ENCODE measurements at regions of chr17 and their contacts with region 1.

Region 1: GRCh38 chr17:75779231-75779986 is 5.2 kb upstream of the UNK start:
- DNase-seq: peak; percentile 94
- H3K4me3 Mint-ChIP-seq: peak overlapping the region; percentile 98
- H3K27ac Mint-ChIP-seq: peak overlapping the region; percentile 99
- H3K4me1 Mint-ChIP-seq: peaks cover 52% of the 10 kb centered on the region
- H3K27me3 Mint-ChIP-seq: peaks cover 2% of the 10 kb centered on the region

Region 2: GRCh38 chr17:75667021-75667790 is 112.2 kb before region 1 on chr17 and contains the starts of genes RECQL5 and SAP30BP:
- intact Hi-C with region 1: loop called (anchors 1 kb)
- DNase-seq: peak; percentile 98
- H3K4me3 Mint-ChIP-seq: peak within 1 kb of the TSS; percentile 79
- H3K27ac Mint-ChIP-seq: peak within 1 kb of the TSS; percentile 71
- H3K4me1 Mint-ChIP-seq: peaks cover 11% of the 10 kb centered on the region
- H3K27me3 Mint-ChIP-seq: no peaks in the 10 kb centered on the region
- total RNA-seq, gene RECQL5: 29.9 and 34.1 TPM in 2 replicates
- total RNA-seq, gene SAP30BP: 113 and 117 TPM in 2 replicates

Region 3: DNA sequence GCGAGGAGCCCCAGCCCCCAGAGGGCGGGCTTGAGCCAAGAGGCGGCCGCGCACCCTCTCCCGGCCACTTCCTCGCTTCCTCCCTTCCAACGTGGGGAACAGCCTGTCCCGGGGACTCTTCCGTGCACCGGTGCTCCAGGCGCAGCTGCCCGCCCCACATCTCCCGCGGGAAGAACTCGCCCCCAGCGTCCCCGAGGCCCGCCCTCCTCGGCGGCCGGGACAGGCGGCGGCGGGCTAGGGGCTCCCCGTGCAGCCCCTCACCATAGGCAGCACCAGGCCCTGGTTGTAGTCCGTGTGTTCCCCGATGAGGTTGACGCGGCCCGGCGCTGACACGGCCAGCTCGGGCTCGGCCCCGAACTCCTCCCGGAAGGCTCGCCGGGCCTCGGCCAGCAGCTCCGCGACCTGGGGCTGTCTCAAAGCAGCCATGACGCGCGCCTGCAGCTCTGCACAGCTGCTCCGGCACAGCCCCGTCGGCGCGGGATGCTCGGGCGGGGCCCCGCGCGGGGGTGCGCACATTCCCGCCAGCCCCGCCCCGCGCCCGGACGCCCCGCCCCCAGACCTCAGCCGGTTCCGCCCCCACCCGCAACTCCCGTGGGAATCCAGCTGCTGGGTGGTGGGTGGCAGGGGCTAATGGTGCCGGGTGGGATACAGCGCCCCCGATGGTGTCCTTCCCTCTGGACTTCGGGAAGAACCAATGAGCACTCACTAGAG is 14.5 kb before region 1 on chr17 and contains the start of gene GALK1:
- intact Hi-C with region 1: loop called (anchors 1 kb)
- DNase-seq: peak; percentile 73
- H3K4me3 Mint-ChIP-seq: peak within 1 kb of the TSS; percentile 84
- H3K27ac Mint-ChIP-seq: peak within 1 kb of the TSS; percentile 72
- H3K4me1 Mint-ChIP-seq: peaks cover 6% of the 10 kb centered on the region
- H3K27me3 Mint-ChIP-seq: no peaks in the 10 kb centered on the region
- total RNA-seq, gene GALK1: 48.0 and 49.3 TPM in 2 replicates

Region 4: GRCh38 chr17:75845049-75845860 is 65.8 kb after region 1 on chr17:
- intact Hi-C with region 1: loop called (anchors 2 kb)
- DNase-seq: no peak
- H3K4me3 Mint-ChIP-seq: peak overlapping the region; percentile 66
- H3K27ac Mint-ChIP-seq: peak overlapping the region; percentile 48
- H3K4me1 Mint-ChIP-seq: peaks cover 16% of the 10 kb centered on the region
- H3K27me3 Mint-ChIP-seq: no peaks in the 10 kb centered on the region

Region 5: DNA sequence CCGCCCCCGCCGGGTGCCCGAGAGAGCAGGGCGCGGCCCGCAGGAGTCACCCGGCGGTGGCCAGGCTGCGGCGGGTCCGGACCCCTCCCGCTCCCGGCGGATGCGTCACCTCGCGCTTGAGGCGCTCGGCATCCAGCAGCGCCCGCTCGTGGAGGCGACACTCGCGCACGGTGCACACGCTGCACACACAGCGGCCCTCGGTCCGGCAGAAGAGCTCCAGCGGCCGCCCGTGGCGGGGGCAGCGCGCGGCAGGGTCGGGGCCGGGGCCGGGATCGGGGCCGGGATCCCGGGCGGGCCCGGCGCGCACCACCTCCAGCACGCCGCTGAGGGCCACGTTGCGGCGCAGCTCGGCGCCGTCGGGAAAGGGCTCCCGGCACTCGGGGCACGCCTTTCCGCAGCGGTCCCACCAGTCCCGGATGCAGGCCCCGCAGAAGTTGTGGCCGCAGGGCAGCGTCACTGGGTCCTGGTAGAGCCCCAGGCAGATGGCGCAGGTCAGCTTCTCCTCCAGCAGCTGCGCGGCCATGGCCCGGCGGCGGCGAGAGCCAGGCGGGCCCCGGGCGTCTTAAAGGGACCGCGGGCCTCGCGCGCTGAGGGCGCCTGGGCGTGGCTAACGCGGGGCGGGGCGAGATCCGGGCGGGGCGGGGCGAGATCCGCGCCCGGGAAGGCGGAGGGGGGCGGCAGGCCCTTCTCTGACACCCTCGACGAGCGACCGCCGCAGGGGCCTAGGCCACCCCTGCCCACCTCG is 117.2 kb after region 1 on chr17 and contains the start of gene TRIM65:
- intact Hi-C with region 1: loop called (anchors 5 kb)
- DNase-seq: peak; percentile 73
- H3K4me3 Mint-ChIP-seq: peak within 1 kb of the TSS; percentile 91
- H3K27ac Mint-ChIP-seq: peak within 1 kb of the TSS; percentile 77
- H3K4me1 Mint-ChIP-seq: peaks cover 26% of the 10 kb centered on the region
- H3K27me3 Mint-ChIP-seq: no peaks in the 10 kb centered on the region
- total RNA-seq, gene TRIM65: 45.0 and 53.7 TPM in 2 replicates

Region 6: GRCh38 chr17:76264755-76265596 is 485.6 kb after region 1 on chr17 and contains the start of gene UBALD2:
- intact Hi-C with region 1: loop called (anchors 2 kb)
- DNase-seq: peak; percentile 99
- H3K4me3 Mint-ChIP-seq: peak within 1 kb of the TSS; percentile 94
- H3K27ac Mint-ChIP-seq: peak within 1 kb of the TSS; percentile 94
- H3K4me1 Mint-ChIP-seq: peaks cover 63% of the 10 kb centered on the region
- H3K27me3 Mint-ChIP-seq: no peaks in the 10 kb centered on the region
- total RNA-seq, gene UBALD2: 206 and 217 TPM in 2 replicates

Region 7: DNA sequence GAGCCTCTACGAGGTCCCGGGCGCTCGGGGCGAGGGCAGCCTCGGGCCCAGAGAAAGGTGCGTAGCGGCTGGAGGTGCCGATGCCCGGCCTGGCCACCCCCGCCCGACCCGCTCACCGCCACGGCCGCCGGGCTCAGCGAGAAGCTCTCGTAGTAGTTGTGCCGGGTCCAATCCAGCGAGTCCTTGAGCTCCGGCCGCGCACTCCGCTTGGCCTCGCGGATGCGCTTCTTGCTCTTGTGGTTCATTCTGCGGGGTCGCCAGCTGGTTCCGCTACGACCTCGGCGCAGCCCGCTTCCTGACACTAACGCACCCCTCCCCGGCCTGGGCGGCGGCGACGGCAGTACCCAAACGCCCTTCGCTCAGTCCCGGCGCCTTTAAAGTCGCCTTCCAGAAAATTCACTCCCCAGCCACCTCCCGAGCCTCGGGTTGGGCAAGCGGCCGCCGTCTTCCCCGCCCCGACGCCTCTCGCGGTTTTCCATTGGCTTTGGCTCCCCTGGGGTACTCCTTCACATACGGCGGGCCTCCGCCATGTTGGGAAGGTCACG is 946.9 kb after region 1 on chr17 and contains the start of gene JMJD6:
- intact Hi-C with region 1: loop called (anchors 5 kb)
- DNase-seq: peak; percentile 95
- H3K4me3 Mint-ChIP-seq: peak within 1 kb of the TSS; percentile 95
- H3K27ac Mint-ChIP-seq: peak within 1 kb of the TSS; percentile 96
- H3K4me1 Mint-ChIP-seq: peaks cover 42% of the 10 kb centered on the region
- H3K27me3 Mint-ChIP-seq: no peaks in the 10 kb centered on the region
- total RNA-seq, gene JMJD6: 80.5 TPM in 2 replicates

Measured in activated T-helper 1 cell treated with anti-CD3 and anti-CD28 coated beads, Interleukin-12 subunit alpha, Interleukin-12 subunit beta, Interleukin-2, Interleukin-4 antibody, amounts not matched to agents 30 ng/mL and 10 ng/mL and 1 ng/mL, durations not matched to agents 14 hours and 24 hours and 36 hours (primary cell).